ENCODE measurements at regions of chr9 and their contacts with region 1.

Region 1: GRCh38 chr9:83919111-83919510 is 2.1 kb downstream of the KIF27 start:
- DNase-seq: no peak
- H3K4me3 ChIP-seq: no peak overlapping the region
- H3K27ac ChIP-seq: no peak overlapping the region
- H3K4me1 ChIP-seq: peaks cover 0 to 17% (median 9%) of the 10 kb centered on the region in 3 donors
- H3K27me3 ChIP-seq: no peaks in the 10 kb centered on the region
- CTCF ChIP-seq: no peak
- POLR2A ChIP-seq: no peak

Region 2: GRCh38 chr9:83622939-83623678 is 296.0 kb before region 1 on chr9 and contains the start of gene IDNK:
- intact Hi-C with region 1: loop called (anchors 10 kb)
- DNase-seq: no peak
- H3K4me3 ChIP-seq: peak within 1 kb of the TSS; percentile 68 to 97 (median 84)
- H3K27ac ChIP-seq: peak within 1 kb of the TSS; percentile 87 to 93 (median 92)
- H3K4me1 ChIP-seq: peaks cover 4 to 32% (median 16%) of the 10 kb centered on the region in 3 donors
- H3K27me3 ChIP-seq: no peaks in the 10 kb centered on the region
- CTCF ChIP-seq: no peak
- POLR2A ChIP-seq: peak in 2 of 4 donors; percentile 48 to 55
- total RNA-seq, gene IDNK: 2.6 to 6.3 (median 3.9) TPM

Region 3: GRCh38 chr9:83965350-83966208 is 46.5 kb after region 1 on chr9:
- intact Hi-C with region 1: no loop called
- DNase-seq: no peak
- H3K4me3 ChIP-seq: no peak overlapping the region
- H3K27ac ChIP-seq: no peak overlapping the region
- H3K4me1 ChIP-seq: peaks cover 0 to 6% (median 3%) of the 10 kb centered on the region in 3 donors
- H3K27me3 ChIP-seq: no peaks in the 10 kb centered on the region
- CTCF ChIP-seq: no peak
- POLR2A ChIP-seq: no peak

Region 4: GRCh38 chr9:84254972-84255371 is 335.9 kb after region 1 on chr9:
- intact Hi-C with region 1: no loop called
- DNase-seq: no peak
- H3K4me3 ChIP-seq: no peak overlapping the region
- H3K27ac ChIP-seq: no peak overlapping the region
- H3K4me1 ChIP-seq: peaks cover 0 to 13% (median 0%) of the 10 kb centered on the region in 3 donors
- H3K27me3 ChIP-seq: no peaks in the 10 kb centered on the region
- CTCF ChIP-seq: no peak
- POLR2A ChIP-seq: no peak